CD8-positive, alpha-beta T cell (primary cell): ENCODE measurements at regions of chr2 and their contacts with region 1.

Region 1: GRCh38 chr2:61426267-61426897 is 44.5 kb downstream of the USP34 start:
- DNase-seq: peak; percentile 51 to 87 (median 76)
- ATAC-seq: peak; percentile 91
- H3K4me3 ChIP-seq: no peak overlapping the region
- H3K4me3 Mint-ChIP-seq: peak overlapping the region; percentile 59
- H3K27ac ChIP-seq: peak overlapping the region; percentile 47 to 77
- H3K27ac Mint-ChIP-seq: peak overlapping the region; percentile 94
- H3K4me1 ChIP-seq: peaks cover 43% of the 10 kb centered on the region
- H3K4me1 Mint-ChIP-seq: peaks cover 72% of the 10 kb centered on the region
- H3K27me3 ChIP-seq: no peaks in the 10 kb centered on the region
- H3K27me3 Mint-ChIP-seq: no peaks in the 10 kb centered on the region
- CTCF ChIP-seq: peak; percentile 74

Region 2: DNA sequence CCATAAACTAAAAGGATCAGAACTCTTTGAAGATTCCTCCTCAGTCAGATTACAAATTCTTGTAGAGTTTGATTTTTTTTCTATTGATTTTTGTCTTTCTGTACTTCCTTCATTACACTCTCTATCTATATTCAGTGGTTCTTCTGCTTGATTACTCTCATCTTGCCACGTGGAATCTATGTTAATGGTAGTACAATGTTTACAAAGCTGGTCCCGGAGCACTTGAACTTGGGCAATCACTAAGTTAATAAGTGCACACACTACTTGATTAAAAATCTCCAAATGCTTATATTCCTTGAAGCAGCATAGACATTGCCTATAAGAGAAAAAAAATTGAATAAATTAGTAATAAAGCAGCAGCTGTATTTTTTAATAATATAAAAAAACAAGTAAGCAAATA is 20.6 kb before region 1 on chr2:
- CTCF ChIA-PET with region 1: interaction called, 15 read pairs
- POLR2A ChIA-PET with region 1: interaction called, 3 read pairs
- intact Hi-C with region 1: no loop called
- DNase-seq: no peak
- ATAC-seq: no peak
- H3K4me3 ChIP-seq: no peak overlapping the region
- H3K4me3 Mint-ChIP-seq: no peak overlapping the region
- H3K27ac ChIP-seq: no peak overlapping the region
- H3K27ac Mint-ChIP-seq: no peak overlapping the region
- H3K4me1 ChIP-seq: no peaks in the 10 kb centered on the region
- H3K4me1 Mint-ChIP-seq: peaks cover 14% of the 10 kb centered on the region
- H3K27me3 ChIP-seq: no peaks in the 10 kb centered on the region
- H3K27me3 Mint-ChIP-seq: no peaks in the 10 kb centered on the region
- CTCF ChIP-seq: no peak

Region 3: DNA sequence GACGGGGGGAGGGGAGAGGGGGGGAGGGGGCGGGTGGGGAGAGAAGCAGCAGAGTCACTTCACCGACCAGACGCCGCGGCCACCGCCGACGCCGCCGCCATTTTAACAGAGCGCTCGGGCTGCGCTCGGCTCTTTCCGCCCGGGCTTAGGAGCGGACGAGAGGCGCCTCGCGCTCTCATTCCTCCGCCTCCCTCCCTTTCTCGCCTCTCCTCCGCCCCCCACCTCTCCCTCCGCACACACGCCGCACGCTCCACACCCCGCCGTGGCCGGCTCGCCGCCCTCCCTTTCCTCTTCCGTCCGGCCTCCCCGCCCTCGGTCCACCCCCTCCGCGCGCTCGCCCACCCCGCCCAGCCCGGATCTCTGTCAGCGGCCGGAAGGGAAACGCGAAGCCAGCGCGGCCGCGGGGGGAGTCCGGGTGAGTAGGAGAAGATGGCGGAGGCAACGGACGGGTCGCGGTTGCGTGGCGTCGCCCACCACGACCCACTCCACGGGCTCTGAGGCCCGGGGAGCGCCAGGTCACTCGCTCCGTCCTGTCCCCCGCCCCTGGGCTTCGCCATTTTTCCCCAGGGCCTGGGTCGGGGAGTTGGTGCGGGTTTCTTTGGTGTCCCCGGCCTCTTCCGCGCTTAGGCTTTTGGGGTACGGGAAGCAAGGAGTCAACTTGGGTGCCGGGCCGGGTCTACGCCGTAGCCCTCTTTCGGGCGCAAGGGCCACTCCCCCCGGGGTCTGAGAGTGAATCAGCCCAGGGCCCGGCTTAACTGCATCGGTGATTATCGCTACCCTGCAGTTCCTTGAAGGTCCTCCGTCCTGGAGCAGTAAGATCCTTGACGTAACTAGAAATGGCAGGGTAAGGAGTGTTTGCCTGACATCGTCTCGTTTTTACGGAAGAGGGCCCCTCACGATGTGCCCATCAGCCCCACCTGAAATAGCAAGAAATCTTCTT is 44.9 kb after region 1 on chr2 and contains the start of gene USP34:
- CTCF ChIA-PET with region 1: interaction called, 13 read pairs
- POLR2A ChIA-PET with region 1: interaction called, 12 read pairs
- intact Hi-C with region 1: loop called (anchors 1 to 2 kb)
- DNase-seq: peak; percentile 90 to 98 (median 93)
- ATAC-seq: peak; percentile 85
- H3K4me3 ChIP-seq: peak within 1 kb of the TSS; percentile 77 to 99
- H3K4me3 Mint-ChIP-seq: peak within 1 kb of the TSS; percentile 92
- H3K27ac ChIP-seq: peak within 1 kb of the TSS; percentile 89 to 100
- H3K27ac Mint-ChIP-seq: peak within 1 kb of the TSS; percentile 98
- H3K4me1 ChIP-seq: peaks cover 35% of the 10 kb centered on the region
- H3K4me1 Mint-ChIP-seq: peaks cover 34% of the 10 kb centered on the region
- H3K27me3 ChIP-seq: no peaks in the 10 kb centered on the region
- H3K27me3 Mint-ChIP-seq: no peaks in the 10 kb centered on the region
- CTCF ChIP-seq: no peak
- total RNA-seq, gene USP34: 99.6 to 103 TPM

Region 4: DNA sequence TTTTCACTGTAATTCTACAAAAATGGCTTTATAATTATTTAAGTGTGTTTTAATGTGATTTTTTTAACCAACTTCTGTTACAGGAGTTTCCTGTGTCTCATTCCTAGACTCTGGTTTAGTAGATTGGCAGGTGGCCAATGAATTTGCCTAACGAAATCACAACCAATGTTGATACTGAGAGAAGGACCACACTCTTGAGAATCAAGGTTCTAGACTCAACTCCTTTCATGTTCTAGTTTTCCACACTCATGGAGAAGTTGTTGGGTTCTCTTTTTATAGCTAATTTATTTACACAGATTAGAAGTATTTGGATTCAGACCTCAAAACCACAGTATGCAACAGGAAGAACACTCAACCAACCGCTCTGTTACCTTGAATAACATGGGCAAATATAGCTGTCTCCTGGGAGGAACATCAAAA is 67.2 kb after region 1 on chr2:
- CTCF ChIA-PET with region 1: interaction called, 16 read pairs
- POLR2A ChIA-PET with region 1: no interaction called
- intact Hi-C with region 1: loop called (anchors 5 kb)
- DNase-seq: peak in 3 of 9 experiments; percentile 20 to 40 (median 21)
- ATAC-seq: no peak
- H3K4me3 ChIP-seq: no peak overlapping the region
- H3K4me3 Mint-ChIP-seq: no peak overlapping the region
- H3K27ac ChIP-seq: peak overlapping the region; percentile 12 to 38
- H3K27ac Mint-ChIP-seq: peak overlapping the region; percentile 75
- H3K4me1 ChIP-seq: peaks cover 17% of the 10 kb centered on the region
- H3K4me1 Mint-ChIP-seq: peaks cover 22% of the 10 kb centered on the region
- H3K27me3 ChIP-seq: no peaks in the 10 kb centered on the region
- H3K27me3 Mint-ChIP-seq: no peaks in the 10 kb centered on the region
- CTCF ChIP-seq: no peak

Region 5: DNA sequence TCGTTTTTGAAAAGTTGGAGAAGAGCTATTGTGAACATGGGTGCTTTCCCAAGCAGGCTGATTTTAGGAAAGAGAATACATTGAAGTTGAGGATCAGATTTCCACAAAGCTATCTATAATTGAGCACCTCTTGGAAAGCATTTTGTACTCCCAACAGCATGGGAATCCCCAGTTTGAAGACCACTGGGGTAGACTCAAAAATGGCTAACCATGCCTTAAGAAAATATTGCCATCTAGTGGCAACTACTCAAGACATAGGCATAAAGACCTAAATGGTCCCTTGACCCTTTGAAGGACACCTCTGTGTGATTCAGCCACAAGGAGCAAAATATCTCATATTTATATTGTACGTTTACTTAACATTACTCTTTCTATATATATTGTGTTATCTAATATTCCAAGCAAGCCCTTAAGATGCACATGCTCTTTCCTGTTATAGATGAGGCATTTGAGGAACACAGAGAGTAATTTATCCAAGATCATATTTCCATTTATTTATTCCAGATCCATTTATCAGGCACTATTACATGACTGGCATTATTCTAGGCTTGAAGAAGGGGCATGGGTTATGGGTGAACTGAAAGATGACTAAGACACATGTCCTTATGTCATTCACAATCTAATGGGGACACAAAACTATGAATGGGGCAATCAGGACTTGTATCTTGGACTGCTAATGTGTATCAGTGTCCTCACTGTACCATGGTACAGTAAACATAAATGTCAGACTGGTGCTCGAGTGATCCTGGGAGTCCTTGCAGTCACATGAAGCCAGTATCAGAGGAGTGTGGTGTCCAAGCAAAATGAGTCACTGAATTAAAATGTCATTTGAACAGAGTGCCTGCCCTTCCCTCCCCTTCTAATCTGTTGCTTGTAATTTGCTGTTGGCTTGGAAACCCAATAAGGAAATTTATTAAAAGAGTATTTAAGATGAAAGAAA is 232.7 kb after region 1 on chr2:
- CTCF ChIA-PET with region 1: interaction called, 9 read pairs
- POLR2A ChIA-PET with region 1: no interaction called
- intact Hi-C with region 1: loop called (anchors 1 to 2 kb)
- DNase-seq: peak in 2 of 9 experiments; percentile 25 to 49
- ATAC-seq: no peak
- H3K4me3 ChIP-seq: no peak overlapping the region
- H3K4me3 Mint-ChIP-seq: no peak overlapping the region
- H3K27ac ChIP-seq: no peak overlapping the region
- H3K27ac Mint-ChIP-seq: no peak overlapping the region
- H3K4me1 ChIP-seq: no peaks in the 10 kb centered on the region
- H3K4me1 Mint-ChIP-seq: peaks cover 9% of the 10 kb centered on the region
- H3K27me3 ChIP-seq: no peaks in the 10 kb centered on the region
- H3K27me3 Mint-ChIP-seq: no peaks in the 10 kb centered on the region
- CTCF ChIP-seq: peak; percentile 20

Region 6: DNA sequence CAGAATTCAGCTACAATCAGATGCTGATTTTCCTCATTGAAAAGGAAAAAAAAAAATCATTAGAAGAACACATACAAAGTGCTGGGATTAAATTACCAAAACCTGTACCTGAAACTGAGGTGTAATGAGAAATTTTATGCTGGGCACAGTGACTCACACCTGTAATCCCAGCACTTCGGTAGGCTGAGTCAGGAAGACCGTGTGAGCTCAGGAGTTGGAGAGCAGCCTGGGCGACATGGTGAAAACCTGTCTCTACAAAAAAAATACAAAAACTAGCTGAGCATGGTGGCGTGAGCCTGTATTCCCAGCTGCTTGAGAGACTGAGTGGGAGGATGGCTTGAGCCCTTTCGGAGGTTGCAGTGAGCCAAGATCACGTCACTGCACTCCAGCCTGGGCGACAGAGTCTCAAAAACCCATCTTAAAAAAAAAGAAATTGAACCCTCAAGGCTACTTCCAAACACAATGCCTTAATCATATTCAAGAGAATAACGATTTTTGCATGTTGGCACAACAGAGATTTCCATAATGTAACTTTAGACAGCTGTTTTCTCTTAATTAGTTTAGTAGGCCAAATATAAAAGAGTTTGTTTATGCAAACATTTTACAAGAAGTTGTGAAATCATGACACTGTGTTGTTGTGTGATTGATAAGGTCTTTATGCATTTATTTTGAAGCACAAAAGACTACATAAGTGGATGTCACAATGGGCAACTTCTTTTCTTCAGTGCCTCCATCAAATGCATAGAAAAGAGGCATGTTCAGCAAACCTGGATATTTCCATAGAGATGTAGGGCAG is 363.6 kb after region 1 on chr2:
- CTCF ChIA-PET with region 1: interaction called, 6 read pairs
- POLR2A ChIA-PET with region 1: no interaction called
- intact Hi-C with region 1: loop called (anchors 1 to 5 kb)
- DNase-seq: no peak
- ATAC-seq: no peak
- H3K4me3 ChIP-seq: no peak overlapping the region
- H3K4me3 Mint-ChIP-seq: no peak overlapping the region
- H3K27ac ChIP-seq: no peak overlapping the region
- H3K27ac Mint-ChIP-seq: no peak overlapping the region
- H3K4me1 ChIP-seq: no peaks in the 10 kb centered on the region
- H3K4me1 Mint-ChIP-seq: peaks cover 5% of the 10 kb centered on the region
- H3K27me3 ChIP-seq: no peaks in the 10 kb centered on the region
- H3K27me3 Mint-ChIP-seq: peaks cover 6% of the 10 kb centered on the region
- CTCF ChIP-seq: no peak